Aorta (tissue), 5 donors: ENCODE measurements at regions of chr18 and their contacts with region 1.

Region 1: GRCh38 chr18:11149441-11150270 is at the start of gene PIEZO2:
- DNase-seq: peak; percentile 80 to 89
- ATAC-seq: peak; percentile 78
- H3K4me3 ChIP-seq: peak within 1 kb of the TSS; percentile 45 to 61
- H3K27ac ChIP-seq: no peak within 1 kb of the TSS
- H3K4me1 ChIP-seq: no peaks in the 10 kb centered on the region
- H3K27me3 ChIP-seq: no peaks in the 10 kb centered on the region
- total RNA-seq, gene PIEZO2: 2.3 to 8.8 TPM

Region 2: DNA sequence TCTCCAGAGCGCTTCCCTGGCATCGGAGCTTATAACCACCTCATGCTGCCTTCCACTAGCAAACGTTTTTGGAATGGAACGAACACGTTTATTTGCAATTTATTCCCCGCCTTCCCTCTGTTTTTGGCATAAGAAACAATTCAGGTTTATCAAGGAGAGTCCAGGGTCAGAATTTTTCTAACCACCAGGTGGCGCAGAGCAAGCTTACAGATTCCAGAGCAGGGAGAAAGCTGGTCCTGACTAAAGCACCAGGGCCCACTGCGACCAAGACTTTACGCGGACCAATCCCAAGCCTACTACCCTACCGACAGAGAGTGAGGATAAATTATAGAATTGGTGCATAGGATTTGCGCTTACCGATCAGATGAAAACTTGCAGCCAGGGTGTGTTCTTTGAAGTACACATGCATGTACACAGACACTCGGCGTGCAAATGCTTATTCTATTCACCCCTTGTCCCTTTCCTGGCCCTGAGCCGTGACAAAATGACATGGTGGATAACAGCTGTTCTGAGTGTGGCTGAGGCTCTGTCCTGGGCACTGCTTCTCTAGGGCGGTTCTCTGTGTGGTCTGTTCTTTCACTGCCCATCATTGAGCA is 589.1 kb before region 1 on chr18:
- intact Hi-C with region 1: loop called in 1 of 2 experiments (anchors 10 kb)
- DNase-seq: peak; percentile 80 to 85
- ATAC-seq: peak; percentile 80
- H3K4me3 ChIP-seq: no peak overlapping the region
- H3K27ac ChIP-seq: no peak overlapping the region
- H3K4me1 ChIP-seq: no peaks in the 10 kb centered on the region
- H3K27me3 ChIP-seq: no peaks in the 10 kb centered on the region

Region 3: GRCh38 chr18:10838553-10838952 is 311.1 kb before region 1 on chr18:
- intact Hi-C with region 1: no loop called
- DNase-seq: no peak
- ATAC-seq: no peak
- H3K4me3 ChIP-seq: no peak overlapping the region
- H3K27ac ChIP-seq: no peak overlapping the region
- H3K4me1 ChIP-seq: no peaks in the 10 kb centered on the region
- H3K27me3 ChIP-seq: no peaks in the 10 kb centered on the region